ENCODE measurements at regions of chr19 and their contacts with region 1.

Region 1: DNA sequence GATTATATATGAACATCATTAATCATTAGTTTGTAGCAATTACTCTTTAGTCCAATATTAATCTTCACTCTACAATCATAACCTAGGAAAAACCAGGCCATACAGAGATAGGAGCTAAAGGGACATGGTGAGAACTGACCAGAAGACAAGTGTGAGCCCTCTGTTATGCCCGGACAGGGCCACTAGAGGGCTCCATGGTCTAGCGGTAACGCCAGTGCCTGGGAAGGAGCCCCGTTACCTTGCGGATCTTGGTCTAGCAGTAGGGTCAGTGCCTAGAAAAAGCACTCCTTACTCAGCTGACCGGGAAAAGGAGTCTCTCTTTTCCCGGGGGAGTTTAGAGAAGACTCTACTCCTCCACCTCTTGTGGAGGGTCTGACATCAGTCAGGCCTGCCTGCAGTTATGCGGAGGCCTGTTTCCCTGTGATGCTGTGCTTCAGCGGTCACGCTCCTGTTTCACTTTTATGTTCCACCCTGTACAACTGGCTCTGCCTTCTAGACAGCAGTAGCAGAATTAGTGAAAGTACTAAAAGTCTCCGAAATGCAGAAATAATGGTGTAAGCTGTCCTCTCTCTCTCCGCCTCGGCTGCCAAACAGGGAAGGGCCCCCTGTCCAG is 13.8 kb downstream of the OR7D4 start:
- DNase-seq: peak; percentile 34
- ATAC-seq: peak; percentile 85
- H3K4me3 ChIP-seq: no peak overlapping the region
- H3K27ac ChIP-seq: no peak overlapping the region
- H3K4me1 ChIP-seq: no peaks in the 10 kb centered on the region
- H3K27me3 ChIP-seq: no peaks in the 10 kb centered on the region
- CTCF ChIP-seq: peak; percentile 47 to 83 (median 76); a peak in 5 of 6 replicates
- POLR2A ChIP-seq: no peak
- RAD21 ChIP-seq: peak; percentile 82

Region 2: GRCh38 chr19:9435279-9436268 is 230.0 kb after region 1 on chr19 and contains the start of gene ZNF266:
- CTCF ChIA-PET with region 1: no interaction called
- POLR2A ChIA-PET with region 1: no interaction called
- RAD21 ChIA-PET with region 1: no interaction called
- intact Hi-C with region 1: loop called (anchors 10 kb)
- DNase-seq: peak; percentile 87
- ATAC-seq: peak; percentile 91
- H3K4me3 ChIP-seq: peak within 1 kb of the TSS; percentile 75 to 77
- H3K27ac ChIP-seq: peak within 1 kb of the TSS; percentile 69
- H3K4me1 ChIP-seq: peaks cover 0 to 7% of the 10 kb centered on the region in 2 experiments; a peak in 2 of 4 replicates
- H3K27me3 ChIP-seq: no peaks in the 10 kb centered on the region
- CTCF ChIP-seq: peak in 2 of 3 experiments; percentile 59 to 70; a peak in 4 of 6 replicates
- POLR2A ChIP-seq: no peak
- RAD21 ChIP-seq: no peak
- total RNA-seq, gene ZNF266: 9.4 TPM

Region 3: DNA sequence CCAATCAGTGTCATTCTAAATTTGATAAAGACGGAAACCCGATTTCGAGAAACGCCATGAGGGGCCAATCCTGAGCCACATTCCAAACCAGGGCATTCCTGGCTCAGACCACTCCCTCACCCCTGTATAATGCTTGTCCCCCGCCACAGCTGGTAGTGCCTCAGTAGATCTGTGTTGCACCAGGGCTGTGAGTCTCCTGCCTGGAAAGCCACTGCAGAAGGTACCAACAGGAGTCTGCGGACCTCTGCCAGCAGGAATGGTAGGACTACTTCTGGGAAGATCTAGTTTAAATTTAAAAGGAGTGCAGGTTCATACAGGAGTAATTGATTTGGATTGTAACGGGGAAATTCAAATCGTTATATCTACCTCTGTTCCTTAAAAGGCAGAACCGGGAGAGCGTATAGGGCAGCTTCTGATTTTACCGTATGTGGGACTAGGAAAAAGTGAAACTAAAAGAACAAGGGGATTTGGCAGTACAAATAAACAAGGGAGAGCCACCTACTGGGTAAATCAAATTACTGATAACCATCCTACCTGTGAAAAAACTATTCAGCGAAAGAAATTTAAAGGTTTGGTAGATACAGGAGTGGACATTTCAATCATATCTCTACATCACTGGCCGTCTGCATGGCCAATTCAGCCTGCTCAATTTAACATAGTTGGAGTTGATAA is 250.5 kb after region 1 on chr19:
- CTCF ChIA-PET with region 1: no interaction called
- POLR2A ChIA-PET with region 1: no interaction called
- RAD21 ChIA-PET with region 1: no interaction called
- intact Hi-C with region 1: no loop called
- DNase-seq: no peak
- ATAC-seq: no peak
- H3K4me3 ChIP-seq: no peak overlapping the region
- H3K27ac ChIP-seq: no peak overlapping the region
- H3K4me1 ChIP-seq: no peaks in the 10 kb centered on the region
- H3K27me3 ChIP-seq: no peaks in the 10 kb centered on the region
- CTCF ChIP-seq: no peak
- POLR2A ChIP-seq: no peak
- RAD21 ChIP-seq: no peak